CD8-positive, alpha-beta memory T cell (primary cell): ENCODE measurements at regions of chr14 and their contacts with region 1.

Region 1: DNA sequence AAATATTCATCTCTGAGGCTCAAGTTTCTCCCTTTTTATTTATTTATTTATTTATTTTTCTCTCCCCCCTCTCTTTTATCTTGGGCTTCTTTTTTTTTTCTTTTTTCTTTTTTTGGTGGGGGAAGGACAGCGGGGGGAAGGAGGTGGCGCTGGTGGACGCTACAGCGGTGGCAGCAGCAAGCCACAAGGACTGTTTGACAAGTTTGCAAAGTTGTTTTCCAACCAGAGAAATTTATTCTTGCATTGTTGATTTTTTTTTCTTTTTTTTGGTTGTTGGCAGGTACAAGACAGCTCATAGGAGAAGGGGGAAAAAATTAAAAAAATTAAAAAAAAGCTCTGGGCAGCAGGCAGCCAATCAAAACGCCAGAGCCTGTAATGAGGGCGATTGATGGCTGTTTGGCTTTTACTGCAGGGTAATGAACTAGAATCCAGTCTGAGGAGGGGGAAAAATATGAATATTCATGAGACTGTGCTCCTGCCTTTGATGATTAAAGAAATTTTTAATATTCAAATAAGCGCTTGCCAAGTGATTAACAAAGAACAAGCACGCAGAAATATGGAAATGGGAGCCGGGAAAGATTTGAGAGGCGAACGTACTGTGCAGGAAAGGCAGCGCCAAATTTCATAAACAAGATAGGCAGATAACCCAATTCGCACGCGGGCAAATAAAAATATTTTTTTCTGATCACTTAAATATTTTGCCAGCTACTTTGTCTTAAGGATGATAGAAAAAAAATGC is 36.2 kb downstream of the BCL11B start:
- DNase-seq: peak in 1 of 5 donors; percentile 54
- H3K4me3 ChIP-seq: peak overlapping the region; percentile 56
- H3K4me3 Mint-ChIP-seq: peak overlapping the region; percentile 84 to 94 (median 87)
- H3K27ac ChIP-seq: peak overlapping the region; percentile 28
- H3K27ac Mint-ChIP-seq: peak overlapping the region; percentile 90 to 100 (median 99)
- H3K4me1 ChIP-seq: peaks cover 97% of the 10 kb centered on the region
- H3K4me1 Mint-ChIP-seq: peaks cover 94 to 98% (median 95%) of the 10 kb centered on the region in 3 donors
- H3K27me3 ChIP-seq: no peaks in the 10 kb centered on the region
- H3K27me3 Mint-ChIP-seq: peaks cover 0 to 2% of the 10 kb centered on the region in 2 donors

Region 2: DNA sequence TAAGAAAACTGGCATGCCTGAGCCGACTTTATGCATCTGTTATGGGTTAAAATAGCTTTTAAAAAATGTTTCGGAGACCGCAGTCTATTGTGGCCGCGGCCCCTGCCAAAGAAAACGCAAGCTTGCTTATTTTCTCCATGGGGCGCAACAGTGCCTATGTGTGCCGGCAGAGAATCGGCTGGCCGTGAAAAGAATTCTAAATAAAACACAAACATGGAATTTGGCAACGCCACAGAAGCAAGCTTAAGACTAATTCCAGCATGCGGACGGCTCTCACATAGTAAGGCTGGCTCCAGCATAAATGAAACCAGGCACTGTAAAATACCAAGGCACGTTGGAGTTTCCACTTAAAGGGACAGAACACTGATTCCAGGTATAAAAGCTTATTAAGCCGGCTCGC is 20.5 kb before region 1 on chr14:
- CTCF ChIA-PET with region 1: interaction called, 8 read pairs
- POLR2A ChIA-PET with region 1: interaction called, 14 read pairs
- DNase-seq: no peak
- H3K4me3 ChIP-seq: peak overlapping the region; percentile 33
- H3K4me3 Mint-ChIP-seq: peak overlapping the region; percentile 42 to 84 (median 77)
- H3K27ac ChIP-seq: no peak overlapping the region
- H3K27ac Mint-ChIP-seq: peak overlapping the region; percentile 17 to 96 (median 86)
- H3K4me1 ChIP-seq: peaks cover 95% of the 10 kb centered on the region
- H3K4me1 Mint-ChIP-seq: peaks cover 94 to 99% (median 99%) of the 10 kb centered on the region in 3 donors
- H3K27me3 ChIP-seq: no peaks in the 10 kb centered on the region
- H3K27me3 Mint-ChIP-seq: peaks cover 0 to 7% of the 10 kb centered on the region in 2 donors

Region 3: GRCh38 chr14:99287269-99287942 is 51.7 kb after region 1 on chr14:
- CTCF ChIA-PET with region 1: no interaction called
- POLR2A ChIA-PET with region 1: interaction called, 13 read pairs
- DNase-seq: peak in 3 of 5 donors; percentile 31 to 63 (median 54)
- H3K4me3 ChIP-seq: peak overlapping the region; percentile 15
- H3K4me3 Mint-ChIP-seq: peak overlapping the region; percentile 75 to 96 (median 85)
- H3K27ac ChIP-seq: peak overlapping the region; percentile 43
- H3K27ac Mint-ChIP-seq: peak overlapping the region; percentile 77 to 96 (median 89)
- H3K4me1 ChIP-seq: peaks cover 13% of the 10 kb centered on the region
- H3K4me1 Mint-ChIP-seq: peaks cover 30 to 40% (median 35%) of the 10 kb centered on the region in 3 donors
- H3K27me3 ChIP-seq: no peaks in the 10 kb centered on the region
- H3K27me3 Mint-ChIP-seq: peaks cover 2 to 3% of the 10 kb centered on the region in 2 donors